ENCODE measurements at regions of chr10 and their contacts with region 1.

Region 1: GRCh38 chr10:15725603-15726002 is 5.9 kb upstream of the ITGA8 start:
- DNase-seq: peak; percentile 49
- CTCF ChIP-seq: peak; percentile 47

Region 2: DNA sequence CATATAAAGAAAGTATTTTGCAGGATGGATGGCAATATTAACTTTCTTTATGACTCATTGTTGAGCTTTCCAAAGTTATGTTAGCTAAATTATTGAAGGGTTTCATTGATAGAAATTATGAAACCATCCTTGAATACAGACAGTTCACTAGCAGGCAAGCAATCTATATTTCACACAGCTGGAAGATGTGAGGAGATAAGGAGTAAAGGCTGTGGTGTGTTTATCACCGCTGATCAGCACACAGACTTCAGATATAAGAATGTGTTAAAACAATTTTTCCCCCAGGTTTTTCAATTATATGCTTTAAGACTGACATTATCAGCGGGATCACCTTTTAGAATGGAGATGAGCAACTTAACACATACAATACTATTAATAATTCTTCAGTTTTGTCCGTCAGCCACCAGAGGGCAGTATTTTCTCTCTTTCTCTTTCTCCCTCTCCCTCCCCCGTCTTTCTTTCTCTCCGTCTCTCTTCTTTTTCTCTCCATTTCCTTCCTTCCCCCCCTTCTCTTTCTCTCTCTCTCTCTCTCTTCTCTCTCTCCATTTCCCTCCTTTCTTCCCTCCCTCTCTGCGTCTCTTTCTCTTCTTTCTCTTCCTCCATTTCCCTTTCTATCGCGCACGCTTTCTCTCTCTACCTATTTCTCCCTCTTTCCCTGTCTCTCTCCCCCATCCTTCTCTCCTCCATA is 291.6 kb before region 1 on chr10:
- in situ Hi-C with region 1: loop called (anchors 10 kb)
- DNase-seq: peak; percentile 60
- CTCF ChIP-seq: peak; percentile 64